Dorsolateral prefrontal cortex (tissue), 120 donors: ENCODE measurements at regions of chr20 and their contacts with region 1.

Region 1: DNA sequence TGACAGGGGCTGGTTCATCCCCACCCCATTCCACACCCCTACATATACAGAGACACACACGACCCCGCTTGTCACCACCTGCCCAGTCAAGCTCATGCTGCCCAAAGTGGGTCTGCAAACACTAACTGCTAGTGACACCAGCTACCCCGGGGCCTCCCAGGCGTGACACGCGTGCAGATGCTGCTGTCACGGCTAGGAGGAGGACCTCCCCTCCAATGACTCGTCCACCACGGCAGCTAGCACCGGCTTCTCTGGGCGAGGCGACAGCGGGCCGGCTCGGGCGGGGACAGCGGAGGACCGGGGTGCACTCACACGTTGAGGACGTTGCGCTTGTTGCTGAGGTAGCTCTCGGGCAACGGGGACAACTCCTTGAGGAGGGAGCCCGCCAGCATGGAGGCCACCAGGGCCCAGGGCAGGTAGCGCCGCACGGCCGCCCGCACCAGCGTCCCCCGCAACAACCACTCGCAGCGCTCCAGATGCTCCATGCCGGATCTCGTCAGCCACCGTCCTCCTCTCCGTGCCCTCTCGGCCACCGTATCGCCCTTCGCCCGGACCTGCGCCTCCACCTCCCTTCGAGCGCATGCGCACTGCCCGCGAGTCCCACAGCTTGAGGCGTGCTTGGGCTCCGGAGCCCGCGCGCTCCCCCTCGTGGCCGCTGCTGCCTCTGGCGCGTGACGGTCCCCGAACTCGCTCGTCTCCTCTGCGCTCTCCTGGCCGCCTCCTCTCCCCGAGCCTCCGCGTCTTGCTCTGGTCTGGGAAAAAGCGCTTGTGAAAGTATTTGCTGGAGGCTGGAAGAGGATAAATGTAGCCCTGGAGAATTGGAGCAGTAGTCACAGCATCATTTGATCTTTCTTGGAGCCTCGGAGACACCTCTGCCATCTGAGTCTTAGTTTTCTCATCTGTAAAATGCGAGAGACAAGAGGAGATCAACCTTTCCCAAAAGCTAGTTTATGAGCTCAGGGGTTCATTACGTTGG is at the start of gene FITM2:
- DNase-seq: peak; percentile 94 to 98 (median 96)
- H3K4me3 ChIP-seq: peak within 1 kb of the TSS; percentile 67 to 100 (median 95)
- H3K27ac ChIP-seq: peak within 1 kb of the TSS in 53 of 59 donors; percentile 6 to 93 (median 75)
- H3K27me3 ChIP-seq: no peaks in the 10 kb centered on the region
- CTCF ChIP-seq: peak; percentile 93 to 100 (median 99)
- total RNA-seq, gene FITM2: 10.8 to 20.4 (median 16.2) TPM

Region 2: DNA sequence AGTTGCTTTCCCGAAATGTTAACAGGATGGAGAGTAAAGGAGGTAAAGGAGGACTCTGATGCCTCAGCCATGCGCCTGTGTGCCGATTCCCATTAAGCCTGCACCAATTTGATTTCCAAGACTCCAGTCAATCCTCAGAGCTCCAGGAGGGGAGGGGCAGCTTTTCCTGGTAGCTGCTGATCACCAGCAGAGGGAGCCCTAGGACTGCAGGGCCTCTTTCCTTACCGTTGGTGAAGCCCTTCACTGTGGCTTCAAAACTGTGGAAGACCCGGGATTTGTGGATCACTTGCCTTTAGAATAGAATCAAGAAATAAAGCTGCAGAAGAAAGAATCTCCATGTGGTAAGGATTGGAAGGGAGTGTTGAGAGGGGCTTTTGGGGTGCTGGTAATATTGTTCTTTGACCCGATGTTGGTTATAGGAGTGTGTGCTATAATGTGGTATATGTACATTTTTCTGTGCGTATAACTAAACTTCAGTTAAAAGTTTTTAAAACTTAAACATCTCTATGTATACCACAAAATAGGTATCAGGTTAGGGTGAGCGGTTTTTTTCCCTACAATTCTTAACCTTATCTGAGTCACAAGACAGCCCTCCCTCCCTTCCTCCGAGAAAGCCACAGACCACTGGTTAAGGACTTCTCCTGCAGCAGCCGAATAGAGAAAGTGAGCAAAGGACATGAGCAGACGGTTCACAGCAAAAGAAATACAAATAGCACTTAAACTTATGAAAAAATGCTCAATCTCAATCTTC is 93.4 kb before region 1 on chr20:
- intact Hi-C with region 1: loop called (anchors 2 kb)
- DNase-seq: peak; percentile 12 to 67 (median 62)
- H3K4me3 ChIP-seq: no peak overlapping the region
- H3K27ac ChIP-seq: peak overlapping the region in 3 of 59 donors; percentile 2 to 36 (median 13)
- H3K27me3 ChIP-seq: no peaks in the 10 kb centered on the region
- CTCF ChIP-seq: peak; percentile 40 to 89 (median 74)

Region 3: DNA sequence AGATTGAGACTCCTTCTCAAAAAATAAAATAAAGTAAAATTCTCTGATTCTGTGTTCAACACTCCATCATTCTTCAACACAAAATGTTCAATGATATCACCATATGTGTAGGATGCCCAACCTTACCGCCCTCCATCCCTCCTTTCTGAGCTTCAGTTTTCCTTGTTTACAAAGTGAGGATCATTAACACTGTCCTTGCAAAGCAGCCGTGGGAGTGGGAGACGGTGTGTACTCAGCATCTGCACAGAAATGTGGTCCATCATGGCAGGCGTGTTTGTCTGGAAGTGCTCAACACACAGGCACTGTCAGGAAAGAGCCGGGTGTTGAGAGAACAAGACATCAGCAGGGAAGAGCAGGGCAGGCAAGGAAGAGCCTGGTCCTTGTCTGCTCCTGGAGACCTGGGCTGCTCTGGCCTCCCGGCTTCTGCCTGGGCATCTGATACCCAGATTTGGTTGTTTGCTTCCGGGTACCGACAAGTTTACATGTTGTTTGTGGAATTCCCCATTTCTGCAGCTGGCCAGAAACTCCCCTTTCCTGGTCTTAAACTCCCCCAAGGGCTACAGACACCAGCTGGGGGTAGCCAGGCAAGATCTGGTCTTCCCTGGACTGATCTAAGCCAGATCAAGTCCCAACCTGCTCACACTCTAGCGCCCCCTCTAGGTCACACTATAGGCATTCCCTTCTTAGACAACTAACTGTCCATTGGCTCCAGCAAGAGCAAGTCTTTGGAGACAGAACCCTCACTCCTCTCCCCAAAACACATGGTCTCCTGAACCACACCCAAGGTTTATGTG is 138.0 kb after region 1 on chr20:
- intact Hi-C with region 1: no loop called
- DNase-seq: no peak
- H3K4me3 ChIP-seq: no peak overlapping the region
- H3K27ac ChIP-seq: no peak overlapping the region
- H3K27me3 ChIP-seq: no peaks in the 10 kb centered on the region
- CTCF ChIP-seq: no peak

Region 4: GRCh38 chr20:44521484-44522481 is 210.8 kb after region 1 on chr20 and contains the start of gene SERINC3:
- intact Hi-C with region 1: loop called in 1 of 2 experiments (anchors 5 kb)
- DNase-seq: peak; percentile 87 to 98 (median 96)
- H3K4me3 ChIP-seq: peak within 1 kb of the TSS; percentile 60 to 100 (median 96)
- H3K27ac ChIP-seq: peak within 1 kb of the TSS; percentile 78 to 100 (median 96)
- H3K27me3 ChIP-seq: no peaks in the 10 kb centered on the region
- CTCF ChIP-seq: peak in 29 of 56 donors; percentile 2 to 61 (median 29)
- total RNA-seq, gene SERINC3: 107 to 236 (median 191) TPM